Body of pancreas (tissue), 4 donors: ENCODE measurements at regions of chr13 and their contacts with region 1.

Region 1: GRCh38 chr13:110108347-110109174 is 198.4 kb downstream of the COL4A1 start:
- DNase-seq: peak; percentile 64 to 82 (median 78)
- ATAC-seq: peak; percentile 82
- H3K4me3 ChIP-seq: no peak overlapping the region
- H3K27ac ChIP-seq: no peak overlapping the region
- H3K4me1 ChIP-seq: peaks cover 6% of the 10 kb centered on the region
- H3K27me3 ChIP-seq: no peaks in the 10 kb centered on the region
- CTCF ChIP-seq: peak; percentile 11 to 85 (median 75)
- POLR2A ChIP-seq: no peak

Region 2: DNA sequence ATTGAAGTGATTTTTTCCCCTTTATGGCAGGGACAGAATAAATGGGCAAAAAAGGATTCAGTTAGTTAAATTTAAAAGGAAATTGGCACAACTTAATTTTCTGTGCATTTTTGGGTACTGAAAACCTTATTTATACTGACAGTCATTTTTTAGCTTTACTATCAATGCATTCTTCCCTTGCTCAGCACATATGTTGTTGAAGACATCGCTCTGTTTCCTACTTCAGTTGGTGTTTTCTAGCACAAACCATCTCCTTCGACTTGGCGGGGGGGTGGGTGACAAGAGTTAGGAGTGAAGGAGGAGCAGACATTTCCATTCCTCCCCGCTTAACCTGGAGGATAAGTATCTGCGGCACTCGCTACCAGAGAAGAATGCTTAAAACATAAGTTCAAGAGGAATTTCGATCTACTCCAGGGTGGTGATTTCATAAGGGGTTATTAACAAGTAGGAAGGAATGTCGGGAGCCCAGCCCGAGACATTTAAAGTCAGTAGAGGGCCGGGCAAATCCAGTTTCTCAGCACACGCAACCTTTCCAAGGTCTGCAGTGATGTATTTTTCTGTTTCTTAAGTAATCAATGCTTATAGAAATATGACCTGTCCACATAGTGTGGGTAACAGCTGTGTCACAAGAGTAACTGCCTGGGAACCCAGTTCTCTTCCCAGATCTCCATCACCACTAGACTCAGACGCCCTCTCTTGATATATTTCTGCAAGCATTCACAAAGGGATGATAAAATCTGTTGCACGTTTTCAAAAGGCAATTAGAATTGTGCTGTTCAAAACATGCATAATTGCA is 953.4 kb before region 1 on chr13:
- intact Hi-C with region 1: loop called (anchors 5 kb)
- DNase-seq: no peak
- ATAC-seq: no peak
- H3K4me3 ChIP-seq: no peak overlapping the region
- H3K27ac ChIP-seq: no peak overlapping the region
- H3K4me1 ChIP-seq: no peaks in the 10 kb centered on the region
- H3K27me3 ChIP-seq: no peaks in the 10 kb centered on the region
- CTCF ChIP-seq: no peak
- POLR2A ChIP-seq: no peak

Region 3: DNA sequence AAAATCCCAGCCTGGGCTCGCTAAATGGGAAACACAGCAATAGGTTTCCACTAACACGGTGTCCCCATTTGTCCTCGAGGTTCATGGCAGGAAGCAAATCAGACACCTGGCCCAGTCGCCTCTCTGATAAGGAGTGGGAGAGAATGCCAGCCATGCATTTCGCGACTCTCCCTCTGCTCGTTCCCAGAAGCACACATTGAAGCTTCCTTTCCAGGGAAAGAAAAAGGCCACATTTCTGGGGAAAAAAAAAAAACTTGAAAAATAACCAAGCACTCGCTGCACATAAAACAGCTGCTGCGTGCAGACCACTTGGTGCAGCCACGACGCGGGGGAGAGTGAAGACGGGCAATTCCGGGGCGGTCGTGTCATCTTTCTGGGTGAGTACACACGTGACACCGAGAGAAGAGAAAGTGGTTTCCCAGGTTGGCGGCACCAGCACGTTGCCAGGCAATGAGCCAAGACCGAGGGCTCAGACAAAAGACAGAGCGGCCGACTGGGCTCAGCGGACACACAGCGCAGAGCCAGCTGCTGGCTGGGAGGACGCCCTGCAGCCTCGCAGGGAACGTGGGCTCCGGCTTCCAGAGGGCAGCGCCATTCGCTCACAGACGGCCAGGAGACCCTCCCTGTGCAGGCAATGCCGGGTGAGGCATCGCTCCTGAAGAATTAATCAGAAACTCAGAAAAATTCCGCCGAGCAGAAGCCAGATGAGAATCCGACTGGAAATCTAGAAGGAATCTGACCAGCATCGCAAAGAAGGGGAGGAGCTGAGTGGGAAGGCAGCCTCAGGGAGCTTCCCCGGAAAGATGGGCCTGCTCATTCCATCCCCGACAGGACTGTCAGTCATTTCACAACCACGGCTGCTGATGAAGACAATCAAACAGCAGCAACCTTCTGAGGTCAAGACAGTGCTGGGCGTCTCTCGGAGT is 239.0 kb before region 1 on chr13:
- intact Hi-C with region 1: loop called (anchors 10 kb)
- DNase-seq: peak; percentile 89 to 93 (median 90)
- ATAC-seq: peak; percentile 94
- H3K4me3 ChIP-seq: no peak overlapping the region
- H3K27ac ChIP-seq: peak overlapping the region; percentile 41 to 84 (median 70)
- H3K4me1 ChIP-seq: peaks cover 46% of the 10 kb centered on the region
- H3K27me3 ChIP-seq: no peaks in the 10 kb centered on the region
- CTCF ChIP-seq: peak in 5 of 7 experiments; percentile 9 to 55 (median 32)
- POLR2A ChIP-seq: peak in 2 of 3 donors; percentile 20 to 63